Activated CD4-positive, alpha-beta T cell treated with anti-CD3 and anti-CD28 coated beads for 36 hours (primary cell): ENCODE measurements at regions of chr18 and their contacts with region 1.

Region 1: GRCh38 chr18:58937071-58937886 is 72.6 kb downstream of the ZNF532 start:
- DNase-seq: no peak
- ATAC-seq: no peak
- H3K4me3 Mint-ChIP-seq: no peak overlapping the region
- H3K27ac Mint-ChIP-seq: no peak overlapping the region
- H3K4me1 Mint-ChIP-seq: peaks cover 4% of the 10 kb centered on the region
- H3K27me3 Mint-ChIP-seq: peaks cover 21% of the 10 kb centered on the region

Region 2: GRCh38 chr18:58484989-58485981 is 452.0 kb before region 1 on chr18:
- CTCF ChIA-PET with region 1: no interaction called
- POLR2A ChIA-PET with region 1: no interaction called
- intact Hi-C with region 1: loop called in 1 of 2 experiments (anchors 10 kb)
- DNase-seq: no peak
- ATAC-seq: no peak
- H3K4me3 Mint-ChIP-seq: no peak overlapping the region
- H3K27ac Mint-ChIP-seq: no peak overlapping the region
- H3K4me1 Mint-ChIP-seq: peaks cover 8% of the 10 kb centered on the region
- H3K27me3 Mint-ChIP-seq: peaks cover 15% of the 10 kb centered on the region

Region 3: DNA sequence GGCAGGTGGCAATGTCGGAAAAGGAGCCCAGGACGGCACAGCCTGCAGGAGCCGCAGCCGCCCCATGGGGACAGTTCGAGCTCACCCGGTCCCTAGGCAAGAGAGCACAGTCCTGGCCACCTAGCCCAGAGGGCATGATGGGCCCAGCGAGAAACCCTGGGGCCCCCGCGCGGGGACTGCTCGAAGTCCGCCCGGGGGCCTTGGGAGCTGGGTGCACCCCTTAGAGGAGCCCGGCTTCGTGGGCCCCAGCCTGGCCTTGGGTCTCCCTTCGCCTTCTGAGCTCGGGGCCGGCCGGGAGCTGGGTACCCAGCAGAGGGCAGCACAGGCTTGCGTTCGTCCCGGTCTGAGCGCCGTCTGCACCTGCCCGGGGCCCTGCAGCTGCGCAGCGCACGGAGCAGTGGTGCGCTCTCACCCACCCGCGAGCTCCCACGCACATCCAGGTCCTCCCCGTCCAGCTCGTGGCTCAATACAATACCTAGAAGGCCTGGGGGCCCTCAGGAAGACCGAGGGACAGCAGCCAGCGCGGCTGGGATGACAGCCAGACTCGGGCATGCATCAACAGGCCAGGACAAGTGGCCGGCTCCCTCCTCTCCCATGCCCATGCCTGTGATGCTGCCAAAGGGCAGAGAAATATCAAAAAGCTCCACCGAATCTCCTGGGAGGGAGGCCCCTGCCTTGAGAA is 168.8 kb before region 1 on chr18:
- CTCF ChIA-PET with region 1: no interaction called
- POLR2A ChIA-PET with region 1: no interaction called
- intact Hi-C with region 1: no loop called
- DNase-seq: peak; percentile 88
- ATAC-seq: peak; percentile 97
- H3K4me3 Mint-ChIP-seq: peak overlapping the region; percentile 38
- H3K27ac Mint-ChIP-seq: no peak overlapping the region
- H3K4me1 Mint-ChIP-seq: peaks cover 3% of the 10 kb centered on the region
- H3K27me3 Mint-ChIP-seq: peaks cover 34% of the 10 kb centered on the region

Region 4: DNA sequence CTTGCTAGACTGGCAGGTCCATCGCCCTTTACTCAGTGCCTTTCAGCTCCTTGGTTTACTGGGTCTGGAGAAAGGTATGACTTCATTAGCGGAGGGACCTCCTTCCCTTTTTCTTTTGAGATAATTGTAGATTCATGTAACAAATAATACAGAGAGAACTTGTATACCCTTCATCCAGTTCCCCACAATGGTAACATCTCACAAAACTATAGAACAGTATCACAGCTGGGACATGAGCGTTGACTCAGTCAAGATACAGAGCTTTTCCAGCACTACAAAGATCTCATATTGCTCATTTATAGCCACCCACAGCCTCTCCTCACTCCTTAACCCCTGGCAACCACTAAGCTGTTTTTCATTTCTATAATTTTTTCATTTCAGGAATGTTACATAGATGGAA is 12.8 kb before region 1 on chr18:
- CTCF ChIA-PET with region 1: interaction called, 3 read pairs
- POLR2A ChIA-PET with region 1: no interaction called
- intact Hi-C with region 1: loop called in 1 of 2 experiments (anchors 2 kb)
- DNase-seq: no peak
- ATAC-seq: no peak
- H3K4me3 Mint-ChIP-seq: no peak overlapping the region
- H3K27ac Mint-ChIP-seq: no peak overlapping the region
- H3K4me1 Mint-ChIP-seq: no peaks in the 10 kb centered on the region
- H3K27me3 Mint-ChIP-seq: peaks cover 11% of the 10 kb centered on the region